ENCODE measurements at regions of chr5 and their contacts with region 1.

Region 1: DNA sequence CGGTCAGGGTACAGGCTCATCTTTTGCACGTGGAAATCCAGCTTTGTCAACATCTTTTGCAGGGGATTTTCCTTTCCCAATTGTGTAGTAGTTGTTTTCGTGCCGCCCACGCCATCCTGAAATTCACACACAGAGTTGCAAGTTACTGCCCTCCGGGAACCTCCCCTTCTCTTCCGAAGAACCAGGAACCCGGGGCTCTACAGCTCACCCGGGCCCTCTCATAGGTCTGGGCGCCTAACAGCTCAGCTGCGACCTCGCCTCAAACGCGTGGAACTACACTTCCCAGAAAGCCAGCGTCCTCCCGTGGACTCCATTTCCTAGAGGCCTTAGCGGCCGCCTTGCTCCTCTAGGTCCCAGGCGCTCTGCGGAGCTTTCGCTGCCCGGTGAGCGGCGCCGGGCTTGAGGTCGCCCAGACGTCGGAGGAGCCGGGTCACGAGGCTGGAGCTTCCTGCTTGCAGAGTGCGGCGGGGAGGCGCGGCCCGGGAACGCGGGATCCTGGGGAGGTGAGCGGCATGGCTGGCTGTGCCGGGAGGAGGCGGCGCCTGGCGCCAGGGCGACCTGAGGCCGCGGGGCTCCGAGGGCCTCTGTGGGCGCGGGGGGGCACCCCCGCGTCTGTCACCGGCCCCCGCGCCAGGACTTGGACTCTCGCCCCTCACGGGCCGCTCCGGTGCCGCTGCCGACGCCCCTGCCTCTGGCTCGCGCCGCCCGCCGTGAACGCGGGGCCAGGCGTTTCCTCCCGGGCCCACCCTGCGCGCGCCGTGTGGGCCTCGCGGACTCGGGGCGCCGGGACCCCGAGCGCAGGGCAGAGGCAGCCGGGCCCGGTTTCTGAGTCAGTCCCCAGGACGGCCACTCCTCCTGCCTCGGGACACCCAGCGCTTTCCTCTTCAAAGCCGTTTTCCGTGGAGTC is at the start of gene ZNF354B:
- DNase-seq: peak; percentile 98
- H3K4me3 ChIP-seq: peak within 1 kb of the TSS; percentile 22 to 78 (median 38)
- H3K27ac ChIP-seq: peak within 1 kb of the TSS; percentile 53
- H3K4me1 ChIP-seq: no peaks in the 10 kb centered on the region
- H3K27me3 ChIP-seq: no peaks in the 10 kb centered on the region
- CTCF ChIP-seq: no peak
- POLR2A ChIP-seq: peak; percentile 63
- total RNA-seq, gene ZNF354B: 16.3 and 17.6 TPM in 2 replicates

Region 2: GRCh38 chr5:178895651-178896571 is 36.0 kb after region 1 on chr5 and contains the start of gene ZFP2:
- CTCF ChIA-PET with region 1: no interaction called
- POLR2A ChIA-PET with region 1: no interaction called
- dilution Hi-C with region 1: no loop called
- intact Hi-C with region 1: loop called (anchors 5 kb)
- DNase-seq: peak; percentile 58
- H3K4me3 ChIP-seq: peak within 1 kb of the TSS; percentile 41 to 59 (median 54)
- H3K27ac ChIP-seq: no peak within 1 kb of the TSS
- H3K4me1 ChIP-seq: no peaks in the 10 kb centered on the region
- H3K27me3 ChIP-seq: no peaks in the 10 kb centered on the region
- CTCF ChIP-seq: no peak
- POLR2A ChIP-seq: no peak
- total RNA-seq, gene ZFP2: 0.21 and 0.75 TPM in 2 replicates

Region 3: DNA sequence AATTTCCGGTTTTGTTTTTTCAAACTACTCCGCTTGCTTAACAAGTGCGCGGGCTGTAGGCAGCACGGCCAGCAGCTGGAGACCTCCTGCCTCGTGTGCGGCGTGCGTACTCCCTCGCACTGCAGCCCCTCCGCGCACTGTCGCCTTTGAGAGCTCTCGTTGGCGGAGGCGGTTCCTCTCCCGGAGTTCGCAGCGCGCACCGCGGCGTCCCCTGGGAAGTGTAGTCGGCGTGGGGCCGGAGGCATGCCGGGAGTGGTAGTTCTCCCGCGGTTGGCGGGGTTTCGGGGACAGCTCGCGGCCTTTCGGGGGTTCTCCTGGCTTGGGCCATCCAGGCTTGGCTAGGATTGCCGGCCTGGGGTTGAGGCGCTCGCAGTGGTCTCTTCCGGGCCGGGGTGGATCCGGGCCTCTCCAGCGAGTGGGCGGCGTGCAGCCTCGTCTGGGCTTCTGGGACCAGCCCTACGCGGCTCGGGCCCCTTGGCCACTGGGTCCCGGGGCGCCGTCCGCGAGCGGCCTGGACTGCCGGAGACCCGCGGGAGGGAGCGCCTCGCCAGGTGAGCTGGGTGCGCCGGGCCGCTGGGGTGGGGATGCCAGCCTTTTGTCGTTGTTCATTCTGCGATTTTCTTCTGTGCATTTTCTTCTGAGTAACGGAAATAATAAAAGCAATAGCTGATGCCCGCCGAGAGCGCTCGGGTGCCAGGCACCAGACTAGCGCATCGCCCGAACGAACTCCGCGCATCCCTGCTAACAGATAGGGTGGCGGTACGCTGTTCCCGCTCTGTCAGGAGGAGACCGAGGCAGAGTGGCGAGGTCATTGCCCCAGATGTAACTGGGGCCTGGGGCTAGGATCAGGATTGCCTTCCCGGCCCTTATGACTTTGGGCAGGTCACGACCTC is 200.5 kb after region 1 on chr5 and contains the start of gene ZNF354C:
- CTCF ChIA-PET with region 1: interaction called, 7 read pairs
- POLR2A ChIA-PET with region 1: interaction called, 8 read pairs
- dilution Hi-C with region 1: no loop called
- intact Hi-C with region 1: loop called (anchors 1 kb)
- DNase-seq: peak; percentile 93
- H3K4me3 ChIP-seq: peak within 1 kb of the TSS; percentile 1 to 73 (median 37)
- H3K27ac ChIP-seq: peak within 1 kb of the TSS; percentile 6
- H3K4me1 ChIP-seq: peaks cover 6% of the 10 kb centered on the region
- H3K27me3 ChIP-seq: no peaks in the 10 kb centered on the region
- CTCF ChIP-seq: no peak
- POLR2A ChIP-seq: peak; percentile 44
- total RNA-seq, gene ZNF354C: 4.7 and 5.0 TPM in 2 replicates

Region 4: DNA sequence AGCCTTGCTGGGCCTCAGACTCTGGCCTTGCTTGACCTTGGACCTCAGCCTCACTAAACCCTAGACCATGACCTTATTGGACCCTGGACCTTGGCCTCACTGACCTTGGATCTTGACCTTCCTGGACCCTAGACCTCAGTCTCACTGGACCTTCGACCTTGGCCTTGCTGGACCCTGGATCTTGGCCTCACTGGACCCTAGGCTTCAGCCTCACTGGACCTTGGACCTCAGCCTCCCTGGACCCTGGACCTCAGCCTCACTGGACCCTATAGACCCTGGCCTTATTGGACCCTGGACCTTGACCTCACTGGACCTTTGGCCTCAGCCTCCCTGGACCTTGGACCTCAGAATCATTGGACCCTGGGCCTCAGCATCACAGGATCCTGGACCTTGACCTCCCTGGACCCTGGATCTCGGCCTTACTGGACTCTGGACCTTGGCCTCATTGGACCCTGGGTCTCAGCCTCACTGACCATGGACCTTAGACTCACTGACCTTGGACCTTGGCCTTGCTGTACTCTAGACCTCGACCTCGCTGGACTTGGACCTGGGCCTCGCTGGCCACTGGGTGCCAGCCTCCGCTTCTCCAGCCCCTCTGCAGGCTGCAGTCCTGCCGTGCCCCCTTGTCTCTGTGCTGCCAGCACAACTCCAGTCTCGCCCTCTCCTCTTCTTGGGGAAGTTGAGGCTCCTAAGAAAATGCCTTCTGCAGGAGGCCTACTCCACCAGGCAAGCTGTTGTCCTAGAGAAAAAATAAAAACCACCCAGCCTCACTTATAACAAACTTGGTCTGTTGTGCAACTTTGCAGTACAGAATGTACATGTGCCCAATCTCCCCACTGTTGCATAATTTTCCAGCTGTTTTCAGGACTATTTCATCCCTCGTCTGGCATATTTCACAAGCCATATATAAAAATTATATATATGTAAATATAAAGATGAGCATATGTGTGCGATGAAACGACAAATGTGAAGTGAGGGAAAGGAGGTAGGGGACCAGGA is 496.4 kb after region 1 on chr5:
- CTCF ChIA-PET with region 1: no interaction called
- POLR2A ChIA-PET with region 1: no interaction called
- dilution Hi-C with region 1: no loop called
- intact Hi-C with region 1: no loop called
- DNase-seq: no peak
- H3K4me3 ChIP-seq: no peak overlapping the region
- H3K27ac ChIP-seq: no peak overlapping the region
- H3K4me1 ChIP-seq: no peaks in the 10 kb centered on the region
- H3K27me3 ChIP-seq: no peaks in the 10 kb centered on the region
- CTCF ChIP-seq: no peak
- POLR2A ChIP-seq: no peak

Region 5: GRCh38 chr5:179559284-179560252 is 699.7 kb after region 1 on chr5:
- CTCF ChIA-PET with region 1: no interaction called
- POLR2A ChIA-PET with region 1: no interaction called
- dilution Hi-C with region 1: no loop called
- intact Hi-C with region 1: loop called (anchors 5 kb)
- DNase-seq: peak; percentile 98
- H3K4me3 ChIP-seq: peak overlapping the region; percentile 22 to 83 (median 48)
- H3K27ac ChIP-seq: peak overlapping the region; percentile 56
- H3K4me1 ChIP-seq: peaks cover 13% of the 10 kb centered on the region
- H3K27me3 ChIP-seq: no peaks in the 10 kb centered on the region
- CTCF ChIP-seq: no peak
- POLR2A ChIP-seq: peak; percentile 90